ENCODE measurements at regions of chr6 and their contacts with region 1.

Region 1: GRCh38 chr6:99568103-99568933 is at the start of gene CCNC:
- DNase-seq: peak; percentile 85
- H3K4me3 Mint-ChIP-seq: peak within 1 kb of the TSS; percentile 99
- H3K27ac Mint-ChIP-seq: peak within 1 kb of the TSS; percentile 95
- H3K4me1 Mint-ChIP-seq: peaks cover 37% of the 10 kb centered on the region
- H3K27me3 Mint-ChIP-seq: no peaks in the 10 kb centered on the region
- total RNA-seq, gene CCNC: 51.3 and 54.0 TPM in 2 replicates

Region 2: DNA sequence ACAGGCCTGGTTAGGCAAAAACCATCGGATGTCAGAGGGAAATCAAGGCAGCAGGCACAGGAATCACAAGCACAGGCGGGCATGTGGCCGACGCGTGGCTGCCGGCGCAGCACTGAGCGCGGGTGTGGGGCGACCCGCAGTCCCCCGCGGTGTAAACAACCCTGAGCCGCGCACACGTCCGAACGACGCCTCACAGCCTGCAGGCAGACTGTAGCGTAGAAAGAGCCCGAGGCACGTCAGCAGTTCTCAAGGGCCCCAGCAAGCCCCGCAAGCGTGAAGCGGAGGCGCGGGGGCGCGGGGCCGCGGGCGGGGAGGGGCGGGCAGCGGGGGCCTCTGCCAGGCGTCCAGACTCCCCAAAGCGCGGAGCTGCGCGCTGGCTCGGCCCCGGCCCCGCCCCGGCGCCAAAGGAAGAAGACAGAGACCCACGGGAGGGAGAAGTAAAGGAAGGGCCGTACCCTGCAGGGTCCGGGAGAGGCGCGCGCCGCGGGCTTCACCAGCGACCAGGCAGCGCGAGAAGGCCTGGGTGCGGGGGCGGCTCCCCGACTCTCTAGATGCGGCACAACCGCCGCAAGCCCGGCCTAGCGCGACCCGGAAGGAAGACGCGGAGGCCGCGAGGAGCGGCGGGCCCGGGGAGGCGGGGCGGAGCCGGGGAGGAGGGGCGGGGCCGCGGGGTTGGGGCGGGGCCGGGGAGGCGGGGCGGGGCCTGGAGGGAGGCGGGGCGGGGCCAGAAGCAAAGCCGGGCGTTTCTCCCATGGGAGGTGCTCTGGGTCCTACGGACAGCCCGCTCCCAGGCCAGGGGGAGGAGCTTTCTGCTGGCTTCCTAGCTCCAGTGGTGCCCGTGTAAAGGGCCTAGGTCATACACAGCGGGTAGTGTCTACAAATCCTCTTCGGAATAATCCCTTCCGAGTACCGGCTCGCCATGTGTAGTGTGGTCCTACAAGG is 620.7 kb before region 1 on chr6 and contains the start of gene FBXL4:
- intact Hi-C with region 1: loop called (anchors 5 kb)
- DNase-seq: peak; percentile 76
- H3K4me3 Mint-ChIP-seq: peak within 1 kb of the TSS; percentile 92
- H3K27ac Mint-ChIP-seq: peak within 1 kb of the TSS; percentile 97
- H3K4me1 Mint-ChIP-seq: peaks cover 24% of the 10 kb centered on the region
- H3K27me3 Mint-ChIP-seq: peaks cover 23% of the 10 kb centered on the region
- total RNA-seq, gene FBXL4: 13.1 and 13.3 TPM in 2 replicates

Region 3: DNA sequence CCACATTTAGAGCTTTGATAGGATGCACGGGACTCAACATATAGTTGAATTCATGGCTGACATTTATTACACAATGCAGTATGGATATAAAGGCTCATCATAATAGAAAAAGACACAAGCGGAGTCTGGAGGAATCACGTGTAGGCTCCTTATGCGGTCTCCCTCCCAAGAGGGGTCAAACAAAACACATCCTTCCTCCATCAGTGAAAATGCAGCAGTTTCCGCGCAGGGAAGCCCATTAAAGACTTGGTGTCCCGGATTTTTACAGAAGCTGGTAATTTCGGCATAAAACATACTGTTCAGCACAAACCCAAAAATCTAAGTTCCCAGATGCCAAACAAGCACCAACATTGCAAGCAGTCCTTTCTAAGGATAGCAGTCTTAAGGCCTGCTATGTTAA is 54.2 kb before region 1 on chr6:
- intact Hi-C with region 1: loop called (anchors 1 kb)
- DNase-seq: no peak
- H3K4me3 Mint-ChIP-seq: peak overlapping the region; percentile 98
- H3K27ac Mint-ChIP-seq: no peak overlapping the region
- H3K4me1 Mint-ChIP-seq: peaks cover 32% of the 10 kb centered on the region
- H3K27me3 Mint-ChIP-seq: peaks cover 10% of the 10 kb centered on the region

Region 4: DNA sequence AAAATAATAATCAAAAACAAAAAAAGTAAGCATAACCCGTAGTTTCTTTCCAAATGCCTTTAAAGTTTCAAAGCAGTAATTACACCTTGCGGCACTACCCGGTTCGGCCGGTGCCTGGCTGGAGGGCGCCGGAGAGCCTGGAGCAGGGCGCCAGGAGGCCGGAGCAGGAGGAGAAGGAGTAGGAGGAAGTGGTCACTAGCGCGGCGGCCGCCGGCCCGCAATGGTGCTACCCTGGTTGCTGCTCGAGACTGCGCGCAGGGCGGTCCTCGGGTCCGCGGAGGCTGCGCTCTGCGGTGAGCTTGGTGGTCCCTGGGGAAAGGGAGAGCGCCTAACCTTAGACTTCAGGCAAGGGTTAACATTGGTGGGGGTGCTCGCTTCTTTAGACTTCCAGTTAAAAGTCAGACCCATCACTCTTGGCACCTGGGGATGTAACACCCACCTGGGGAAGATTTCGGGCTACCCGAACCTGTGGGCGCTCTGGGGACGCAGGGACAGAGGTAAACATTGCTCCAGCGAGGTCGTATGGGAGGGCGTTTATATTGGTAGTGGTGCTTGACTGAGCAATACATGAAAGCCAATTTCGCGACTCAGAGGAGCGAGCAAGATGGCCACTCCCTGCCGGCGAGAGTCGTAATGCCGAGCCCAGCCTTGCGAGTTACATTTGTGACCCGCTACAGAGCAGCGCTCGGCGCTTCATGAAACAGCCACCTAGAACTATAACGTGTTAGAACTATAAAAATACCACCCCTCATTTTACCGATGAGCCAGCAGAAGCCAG is 47.3 kb before region 1 on chr6:
- intact Hi-C with region 1: loop called (anchors 1 kb)
- DNase-seq: peak; percentile 68
- H3K4me3 Mint-ChIP-seq: peak overlapping the region; percentile 98
- H3K27ac Mint-ChIP-seq: peak overlapping the region; percentile 96
- H3K4me1 Mint-ChIP-seq: peaks cover 20% of the 10 kb centered on the region
- H3K27me3 Mint-ChIP-seq: peaks cover 11% of the 10 kb centered on the region

Region 5: GRCh38 chr6:99668036-99668705 is 99.9 kb after region 1 on chr6:
- intact Hi-C with region 1: no loop called
- DNase-seq: no peak
- H3K4me3 Mint-ChIP-seq: no peak overlapping the region
- H3K27ac Mint-ChIP-seq: no peak overlapping the region
- H3K4me1 Mint-ChIP-seq: no peaks in the 10 kb centered on the region
- H3K27me3 Mint-ChIP-seq: peaks cover 7% of the 10 kb centered on the region

Region 6: DNA sequence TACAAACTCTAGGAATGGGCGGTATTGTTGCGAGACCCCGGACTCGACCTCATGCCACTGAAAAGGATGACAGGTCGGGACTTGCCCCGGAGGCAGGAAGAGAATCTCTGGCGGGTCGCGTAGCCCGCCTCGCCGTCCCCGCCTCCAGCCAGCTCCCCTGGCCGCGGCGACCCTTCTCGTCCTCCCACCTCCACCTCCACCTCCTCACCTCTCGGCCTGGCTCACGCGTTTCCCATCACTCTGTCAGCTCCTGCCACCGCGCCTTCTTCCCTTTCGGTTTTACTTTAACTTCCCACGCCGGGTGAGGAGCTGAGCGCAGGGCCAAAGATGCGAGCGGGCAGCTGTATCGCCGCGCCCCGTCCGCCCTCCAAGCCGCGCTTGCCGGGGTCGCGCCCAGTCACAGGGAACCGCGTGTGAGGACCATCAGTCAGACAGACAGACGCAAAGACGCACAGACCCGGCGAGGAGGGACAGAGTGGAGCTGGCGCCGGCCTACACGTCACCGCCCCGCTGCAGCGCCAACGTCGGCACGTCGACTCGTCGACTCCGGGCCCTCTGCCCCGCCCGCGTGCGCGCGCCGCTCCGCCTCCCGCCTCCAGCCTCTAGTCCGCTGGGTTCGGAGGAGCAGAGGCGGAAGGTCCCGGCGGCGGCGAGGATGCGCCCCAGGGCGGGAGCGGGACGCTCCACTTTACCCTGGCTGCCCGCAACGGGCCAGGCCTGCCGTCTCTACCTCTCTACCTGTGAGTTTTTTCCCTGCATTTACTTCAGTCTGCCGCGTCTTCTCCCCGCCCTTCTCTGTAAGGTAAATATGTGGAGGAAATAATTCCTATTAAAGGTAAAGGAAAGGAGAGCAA is 1312.8 kb after region 1 on chr6 and contains the start of gene ASCC3:
- intact Hi-C with region 1: loop called (anchors 2 kb)
- DNase-seq: peak; percentile 89
- H3K4me3 Mint-ChIP-seq: peak within 1 kb of the TSS; percentile 100
- H3K27ac Mint-ChIP-seq: peak within 1 kb of the TSS; percentile 100
- H3K4me1 Mint-ChIP-seq: peaks cover 47% of the 10 kb centered on the region
- H3K27me3 Mint-ChIP-seq: peaks cover 3% of the 10 kb centered on the region
- total RNA-seq, gene ASCC3: 70.1 and 70.8 TPM in 2 replicates

Measured in activated T-helper 1 cell treated with anti-CD3 and anti-CD28 coated beads, Interleukin-12 subunit alpha, Interleukin-12 subunit beta, Interleukin-2, Interleukin-4 antibody, amounts not matched to agents 30 ng/mL and 10 ng/mL and 1 ng/mL, durations not matched to agents 14 hours and 24 hours and 36 hours (primary cell).